AG04449 (cell line): ENCODE measurements at regions of chr21 and their contacts with region 1.

Region 1: DNA sequence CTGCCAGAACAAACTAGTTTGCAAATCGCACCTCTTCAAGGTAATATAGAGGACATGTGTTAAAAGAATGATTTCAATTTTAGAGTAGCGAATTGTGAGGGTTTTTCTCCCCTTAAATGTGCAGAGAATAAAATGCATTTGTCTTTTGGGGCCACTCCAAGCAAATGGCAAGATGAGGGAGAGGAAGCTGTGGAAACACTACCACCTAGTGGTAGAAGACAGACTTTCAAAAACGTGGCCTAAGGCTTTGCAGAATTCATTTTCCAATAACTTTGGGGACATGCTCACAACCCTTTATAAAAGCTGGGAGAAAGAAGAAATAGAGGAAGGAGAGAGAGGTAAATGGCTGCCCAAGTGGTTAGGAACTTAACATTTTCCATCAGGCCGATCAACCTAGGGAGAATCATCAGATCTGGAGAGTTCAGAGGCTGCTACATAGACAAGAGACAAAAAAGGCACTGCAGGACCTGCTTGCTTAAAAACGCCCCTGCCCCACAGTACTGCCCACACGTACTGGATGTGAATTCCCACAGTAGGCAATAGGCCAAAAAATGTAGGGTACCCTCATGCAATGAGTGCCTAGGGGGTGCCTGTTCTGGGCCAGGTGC is 15.7 kb upstream of the RCAN1 start:
- DNase-seq: no peak
- H3K4me3 ChIP-seq: no peak overlapping the region
- CTCF ChIP-seq: peak; percentile 63

Region 2: DNA sequence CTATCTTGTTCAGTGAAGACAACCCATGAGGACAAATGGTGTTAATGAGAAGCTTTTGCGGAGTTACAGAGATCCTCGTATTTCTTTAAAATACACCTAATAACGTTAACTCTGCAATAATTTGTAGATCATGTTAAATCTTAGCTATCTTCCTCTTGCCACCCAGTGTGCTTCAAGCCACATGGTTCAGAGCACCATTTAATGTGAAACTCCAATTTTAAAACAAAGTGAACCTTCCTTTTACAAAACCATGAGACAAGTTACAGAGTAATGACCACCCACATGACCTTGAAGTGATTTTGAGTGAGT is 268.6 kb before region 1 on chr21:
- CTCF ChIA-PET with region 1: interaction called, 70 read pairs
- POLR2A ChIA-PET with region 1: no interaction called
- DNase-seq: no peak
- H3K4me3 ChIP-seq: no peak overlapping the region
- CTCF ChIP-seq: no peak

Region 3: DNA sequence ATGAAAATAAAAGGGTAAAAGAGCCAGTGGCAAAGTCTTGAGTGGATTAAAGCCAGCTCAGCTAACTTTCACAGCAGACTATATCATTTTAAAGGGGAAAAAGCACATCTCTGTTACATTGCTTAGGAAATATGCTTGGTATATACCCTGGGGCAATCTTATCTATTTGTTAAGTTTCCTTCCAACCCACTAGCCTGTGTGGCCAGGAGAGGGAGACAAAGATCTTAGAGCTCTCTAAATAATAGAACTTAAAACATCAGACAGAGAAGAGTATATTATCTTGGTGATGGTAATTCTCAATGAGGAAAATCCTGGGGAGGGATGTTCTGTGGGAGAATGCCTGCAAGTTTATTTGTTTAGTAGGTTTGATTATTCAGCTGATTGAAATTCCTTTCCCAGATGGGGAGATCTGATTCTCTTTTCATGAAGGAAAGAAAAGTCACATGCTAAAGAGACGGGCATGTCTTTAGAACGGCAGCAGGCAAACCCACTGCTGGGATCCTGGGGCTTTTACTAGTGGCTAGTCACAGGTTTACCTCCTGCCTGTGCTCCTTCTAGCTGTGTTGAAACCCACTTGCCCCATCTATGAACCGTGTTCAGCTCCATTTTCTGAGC is 263.2 kb before region 1 on chr21:
- CTCF ChIA-PET with region 1: interaction called, 70 read pairs
- POLR2A ChIA-PET with region 1: no interaction called
- DNase-seq: peak; percentile 60
- H3K4me3 ChIP-seq: no peak overlapping the region
- CTCF ChIP-seq: peak; percentile 66

Region 4: DNA sequence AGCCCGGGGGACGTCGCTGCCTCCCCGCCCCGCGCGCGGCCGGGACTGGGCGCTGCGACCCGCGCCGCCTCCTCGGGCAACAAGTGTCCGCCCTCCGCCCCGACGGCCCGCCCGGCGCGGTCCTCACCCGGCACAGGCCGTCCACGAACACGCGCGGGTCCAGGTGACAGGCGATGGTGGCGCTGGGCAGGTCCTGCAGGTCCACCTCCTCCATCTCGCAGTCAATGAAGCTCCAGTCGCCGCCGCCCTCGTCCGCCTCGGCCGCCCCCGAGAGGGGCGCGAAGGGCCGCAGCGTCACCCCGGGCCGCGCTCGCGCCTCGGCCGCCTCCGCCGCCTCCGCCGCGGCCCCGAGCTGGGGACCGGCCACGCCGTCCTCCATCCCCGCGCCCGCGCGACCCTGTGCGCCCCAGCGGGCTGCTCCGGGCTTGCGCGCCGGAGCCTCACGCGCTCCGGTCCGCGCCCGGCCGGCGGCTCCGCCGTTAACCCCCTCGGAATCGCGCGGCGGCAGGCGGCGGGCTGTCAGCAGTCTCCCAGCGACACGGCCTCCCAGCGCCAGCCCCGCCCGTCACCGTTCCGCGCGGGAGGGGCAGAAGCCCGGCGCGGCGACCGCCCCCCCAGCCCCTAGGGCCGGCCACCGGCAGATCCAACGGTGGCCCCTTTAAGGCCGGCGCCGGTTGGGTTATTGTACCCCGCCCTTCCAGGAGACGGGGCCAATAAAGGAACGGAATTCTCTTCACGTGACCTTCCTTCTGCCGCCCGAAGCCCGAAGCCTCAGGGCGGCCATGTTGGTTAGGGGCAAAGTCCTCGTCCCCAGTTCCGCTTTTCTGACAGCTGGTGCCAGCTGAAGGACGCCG is 15.8 kb before region 1 on chr21 and contains the start of gene RCAN1:
- CTCF ChIA-PET with region 1: interaction called, 50 read pairs
- POLR2A ChIA-PET with region 1: no interaction called
- DNase-seq: peak; percentile 51
- H3K4me3 ChIP-seq: peak within 1 kb of the TSS; percentile 71
- CTCF ChIP-seq: no peak

Region 5: DNA sequence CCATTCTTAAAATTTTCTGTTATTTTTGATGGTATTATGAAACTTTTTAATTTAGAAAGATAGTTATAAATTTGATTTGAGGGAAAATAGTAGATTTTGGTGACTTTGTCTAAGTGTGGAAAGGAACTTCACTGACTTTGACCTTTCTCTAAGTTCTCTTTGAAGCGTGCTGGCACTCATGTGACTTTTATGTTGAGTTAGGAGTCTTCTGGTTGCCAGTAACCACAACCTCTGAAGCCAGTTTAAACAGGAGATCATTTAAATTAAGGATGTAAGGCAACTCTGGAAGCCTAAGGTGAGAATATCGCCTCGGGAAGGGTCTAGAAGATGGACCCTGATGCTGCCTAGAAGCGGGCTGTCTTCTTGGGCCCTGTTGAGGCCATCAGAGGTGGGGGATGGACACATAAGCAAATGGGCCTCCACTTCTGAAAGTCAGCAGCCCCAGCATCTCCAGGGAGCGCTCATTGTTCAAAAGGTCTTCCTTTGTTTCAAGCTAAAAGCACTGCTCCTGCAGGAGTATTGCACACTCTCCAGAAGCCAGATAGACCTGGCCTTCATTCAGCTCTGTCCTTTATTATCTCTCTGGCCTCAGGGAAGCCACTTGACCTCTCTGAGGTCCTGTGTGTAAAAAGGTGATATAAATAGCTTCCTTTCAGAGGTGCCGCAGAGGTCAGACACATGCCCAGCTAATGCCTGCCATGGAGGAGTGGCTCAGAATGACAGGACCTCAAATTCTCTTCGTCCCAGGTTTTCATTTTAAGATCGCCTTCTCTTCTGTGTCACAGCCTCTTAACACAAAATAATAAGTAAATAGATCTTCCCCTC is 10.6 kb before region 1 on chr21:
- CTCF ChIA-PET with region 1: interaction called, 27 read pairs
- POLR2A ChIA-PET with region 1: no interaction called
- DNase-seq: no peak
- H3K4me3 ChIP-seq: no peak overlapping the region
- CTCF ChIP-seq: no peak

Region 6: DNA sequence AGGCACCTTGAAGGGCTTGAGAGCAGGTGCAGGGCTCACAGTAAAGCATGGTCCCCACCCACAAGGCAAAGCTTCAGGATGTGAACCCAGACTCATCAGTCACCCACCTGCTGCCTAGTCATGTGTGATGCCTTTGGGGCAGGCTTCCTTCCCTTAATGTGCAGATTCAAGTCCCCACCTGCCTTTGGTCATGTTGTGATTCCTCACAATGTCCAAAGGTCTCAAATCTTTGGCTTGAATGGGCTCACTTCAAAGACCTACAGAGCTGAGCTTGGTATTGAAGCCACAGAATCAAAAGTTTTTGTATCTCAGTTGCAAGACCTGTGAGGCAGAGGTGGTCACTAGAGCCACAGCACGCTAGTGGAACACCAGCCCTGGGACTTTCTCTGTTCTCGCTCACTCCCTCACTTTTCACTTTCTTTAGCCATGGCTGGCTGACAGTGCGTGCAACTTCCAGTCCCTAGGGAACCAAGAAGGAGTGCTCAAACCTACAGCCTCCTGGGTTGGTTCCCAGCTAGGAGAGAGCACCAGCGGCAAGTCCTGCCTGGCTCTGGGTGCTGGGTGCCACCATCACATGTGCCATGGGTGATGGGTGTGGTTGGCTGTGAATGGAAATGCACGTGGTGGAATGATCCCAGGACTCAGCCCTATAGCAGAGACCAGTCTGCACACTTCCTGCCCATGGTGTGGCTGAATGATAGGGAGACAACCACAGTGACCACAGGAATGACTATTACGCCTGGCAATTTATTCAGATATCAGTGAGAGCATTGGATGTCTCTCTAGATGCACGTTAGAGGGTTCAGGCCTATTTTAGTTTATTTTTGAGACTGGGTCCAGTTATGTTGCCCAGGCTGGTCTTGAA is 11.8 kb after region 1 on chr21:
- CTCF ChIA-PET with region 1: interaction called, 58 read pairs
- POLR2A ChIA-PET with region 1: no interaction called
- DNase-seq: no peak
- H3K4me3 ChIP-seq: no peak overlapping the region
- CTCF ChIP-seq: no peak

Region 7: DNA sequence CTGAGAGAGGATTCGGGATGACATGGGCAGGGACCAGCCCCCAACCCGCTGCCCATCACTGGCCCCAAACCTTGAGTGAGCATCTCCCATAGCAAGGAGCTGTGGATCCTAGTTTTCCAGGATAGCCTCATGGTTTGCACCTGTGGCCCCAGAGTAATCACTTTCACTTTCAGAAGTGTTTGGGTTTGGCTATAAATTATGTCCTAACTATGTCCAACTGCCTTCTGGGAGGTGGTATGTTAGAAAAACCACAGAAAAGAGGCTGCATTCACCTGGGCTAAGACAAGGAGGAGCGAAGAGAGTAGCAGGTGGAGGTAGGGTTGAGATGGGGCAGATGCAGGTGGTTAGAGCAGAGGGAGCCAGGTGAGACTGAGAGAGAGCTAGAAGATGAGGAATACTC is 18.8 kb after region 1 on chr21:
- CTCF ChIA-PET with region 1: interaction called, 58 read pairs
- POLR2A ChIA-PET with region 1: no interaction called
- DNase-seq: no peak
- H3K4me3 ChIP-seq: no peak overlapping the region
- CTCF ChIP-seq: no peak

Region 8: GRCh38 chr21:34679051-34679450 is 48.4 kb after region 1 on chr21:
- CTCF ChIA-PET with region 1: no interaction called
- POLR2A ChIA-PET with region 1: no interaction called
- DNase-seq: no peak
- H3K4me3 ChIP-seq: no peak overlapping the region
- CTCF ChIP-seq: no peak